ENCODE measurements at regions of chr1 and their contacts with region 1.

Region 1: DNA sequence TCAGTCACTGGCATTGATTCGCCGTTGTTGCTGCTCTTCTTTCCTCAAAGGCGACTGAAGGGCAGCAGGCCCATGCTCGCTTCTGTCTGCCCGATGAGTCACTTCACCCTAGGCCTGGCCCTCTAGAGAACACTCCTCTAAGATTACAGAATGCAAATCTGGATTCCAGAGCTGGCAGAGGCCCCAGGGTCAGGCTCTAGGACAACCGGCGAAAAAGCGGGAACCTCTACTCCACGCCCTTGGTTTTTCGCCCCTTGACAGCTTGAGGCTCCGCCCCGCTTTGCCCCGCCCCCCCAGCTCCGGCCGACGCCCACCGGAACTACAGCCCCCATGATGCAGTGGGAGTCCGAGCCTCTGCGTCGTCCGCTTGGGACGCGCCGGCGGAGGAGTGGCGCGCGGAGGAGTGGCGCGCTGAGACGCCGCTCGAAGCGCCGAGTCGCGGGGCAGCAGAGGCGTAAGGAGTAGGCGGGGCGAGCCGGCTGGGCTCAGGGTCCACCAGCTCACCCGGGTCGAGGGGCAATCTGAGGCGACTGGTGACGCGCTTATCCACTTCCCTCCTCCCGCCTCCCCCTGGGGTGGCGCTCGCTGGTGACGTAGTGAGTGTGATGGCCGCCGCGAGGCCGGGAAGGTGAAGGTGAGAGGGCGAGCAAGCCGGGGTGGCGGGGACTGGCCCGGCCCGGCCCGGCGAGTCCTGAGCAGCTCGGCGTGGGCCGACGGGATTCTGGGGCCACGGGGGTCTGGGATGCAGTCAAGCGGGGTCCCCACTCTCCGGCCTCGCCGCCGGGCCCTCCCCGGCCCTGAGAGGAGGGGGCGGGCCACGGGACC is at the start of gene MFN2:
- DNase-seq: peak; percentile 97
- ATAC-seq: peak; percentile 93
- total RNA-seq, gene MFN2: 697 TPM

Region 2: GRCh38 chr1:11838349-11839272 is 141.5 kb before region 1 on chr1:
- intact Hi-C with region 1: loop called (anchors 10 kb)
- DNase-seq: peak; percentile 89
- ATAC-seq: peak; percentile 87

Region 3: GRCh38 chr1:11907275-11908094 is 72.6 kb before region 1 on chr1:
- intact Hi-C with region 1: loop called (anchors 5 kb)
- DNase-seq: peak; percentile 91
- ATAC-seq: peak; percentile 91

Region 4: GRCh38 chr1:11934302-11935056 is 45.6 kb before region 1 on chr1 and contains the start of gene PLOD1:
- intact Hi-C with region 1: loop called (anchors 2 kb)
- DNase-seq: peak; percentile 94
- ATAC-seq: peak; percentile 91
- total RNA-seq, gene PLOD1: 70.4 TPM

Region 5: DNA sequence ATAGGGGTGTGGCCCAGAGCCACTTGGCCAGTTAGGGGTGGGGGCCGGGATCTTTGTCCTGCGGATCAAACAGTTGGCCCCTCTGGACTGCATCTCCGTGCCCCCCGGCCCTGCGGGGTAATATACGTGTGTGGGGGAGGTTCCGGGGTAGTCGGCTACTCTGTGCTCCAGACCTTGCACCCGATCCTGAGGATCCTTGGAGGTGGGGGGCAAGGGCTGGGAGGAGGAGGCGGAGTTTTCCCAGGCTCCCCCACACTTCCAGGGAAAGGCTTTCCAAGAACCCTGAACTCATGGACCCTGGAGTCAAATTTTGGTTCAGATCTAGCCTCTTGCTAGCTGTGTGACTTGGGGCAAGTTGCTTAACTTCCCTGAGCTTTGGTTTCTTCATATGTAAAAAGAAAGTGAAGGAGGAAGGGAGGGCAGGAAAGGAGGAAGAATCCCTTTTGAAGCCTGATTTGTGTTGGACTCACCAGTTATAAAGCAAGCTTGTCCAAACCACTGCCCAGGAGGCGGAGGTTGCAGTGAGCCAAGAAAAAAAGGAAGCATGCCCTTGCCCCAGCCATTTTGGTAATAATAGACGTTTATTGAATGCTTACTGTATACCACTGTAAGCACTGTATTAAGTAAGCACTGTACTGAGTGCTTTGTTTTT is 39.9 kb after region 1 on chr1:
- intact Hi-C with region 1: loop called (anchors 5 kb)
- DNase-seq: no peak
- ATAC-seq: peak; percentile 6